PC-9 (cell line): ENCODE measurements at regions of chr17 and their contacts with region 1.

Region 1: GRCh38 chr17:2380226-2380922 is 20.5 kb downstream of the MNT start:
- DNase-seq: no peak
- H3K4me3 ChIP-seq: no peak overlapping the region
- H3K27ac ChIP-seq: no peak overlapping the region
- H3K4me1 ChIP-seq: no peaks in the 10 kb centered on the region
- H3K27me3 ChIP-seq: no peaks in the 10 kb centered on the region
- CTCF ChIP-seq: no peak

Region 2: GRCh38 chr17:2312736-2313135 is 67.6 kb before region 1 on chr17:
- CTCF ChIA-PET with region 1: no interaction called
- POLR2A ChIA-PET with region 1: interaction called, 14 read pairs
- intact Hi-C with region 1: no loop called
- DNase-seq: no peak
- H3K4me3 ChIP-seq: no peak overlapping the region
- H3K27ac ChIP-seq: peak overlapping the region; percentile 18; the same call in 1 of the 2 replicates
- H3K4me1 ChIP-seq: no peaks in the 10 kb centered on the region; the same call in 1 of the 2 replicates
- H3K27me3 ChIP-seq: no peaks in the 10 kb centered on the region
- CTCF ChIP-seq: no peak

Region 3: GRCh38 chr17:2363851-2364762 is 16.3 kb before region 1 on chr17:
- CTCF ChIA-PET with region 1: interaction called, 11 read pairs
- POLR2A ChIA-PET with region 1: no interaction called
- intact Hi-C with region 1: no loop called
- DNase-seq: no peak
- H3K4me3 ChIP-seq: no peak overlapping the region
- H3K27ac ChIP-seq: no peak overlapping the region
- H3K4me1 ChIP-seq: peaks cover 26% of the 10 kb centered on the region
- H3K27me3 ChIP-seq: no peaks in the 10 kb centered on the region
- CTCF ChIP-seq: no peak